Activated CD4-positive, alpha-beta memory T cell treated with anti-CD3 and anti-CD28 coated beads for 36 hours (primary cell): ENCODE measurements at regions of chr1 and their contacts with region 1.

Region 1: DNA sequence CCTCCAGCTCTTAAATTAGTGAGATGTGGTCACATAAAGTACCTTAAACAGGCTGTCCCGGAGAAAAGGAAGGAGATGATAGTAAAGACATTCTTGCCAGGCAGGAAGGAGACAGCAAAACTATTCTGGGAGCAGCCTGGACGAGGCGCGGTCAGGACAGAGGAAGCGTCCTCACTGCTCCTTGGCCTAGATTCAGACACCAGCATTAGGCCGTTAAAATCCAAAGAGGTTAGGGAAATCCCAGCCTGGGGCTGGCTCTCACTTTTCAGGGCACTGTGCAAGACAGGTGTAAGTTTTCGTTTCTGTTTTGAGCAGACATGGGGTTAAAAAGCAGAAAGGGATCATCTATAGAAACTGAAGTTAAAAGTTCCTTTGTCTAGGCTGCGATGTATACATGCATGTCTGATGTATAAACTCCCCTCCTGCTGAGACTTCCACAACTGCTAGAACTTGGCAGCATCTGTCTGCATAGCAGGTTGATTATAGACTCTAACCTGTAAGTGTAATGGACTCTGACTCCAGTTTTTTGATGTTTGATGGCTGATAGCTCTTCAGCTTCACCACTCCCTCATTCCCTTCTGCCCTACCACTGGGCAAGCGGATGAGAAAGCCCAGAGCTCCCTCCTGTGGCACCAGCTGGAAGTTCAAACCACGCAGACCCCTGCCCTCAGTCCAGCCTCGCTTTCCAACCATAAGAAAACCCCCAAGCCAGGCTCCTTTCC is 21.5 kb downstream of the STPG1 start:
- DNase-seq: peak; percentile 79
- H3K4me3 Mint-ChIP-seq: peak overlapping the region; percentile 68
- H3K27ac Mint-ChIP-seq: peak overlapping the region; percentile 82
- H3K4me1 Mint-ChIP-seq: peaks cover 27% of the 10 kb centered on the region
- H3K27me3 Mint-ChIP-seq: no peaks in the 10 kb centered on the region

Region 2: DNA sequence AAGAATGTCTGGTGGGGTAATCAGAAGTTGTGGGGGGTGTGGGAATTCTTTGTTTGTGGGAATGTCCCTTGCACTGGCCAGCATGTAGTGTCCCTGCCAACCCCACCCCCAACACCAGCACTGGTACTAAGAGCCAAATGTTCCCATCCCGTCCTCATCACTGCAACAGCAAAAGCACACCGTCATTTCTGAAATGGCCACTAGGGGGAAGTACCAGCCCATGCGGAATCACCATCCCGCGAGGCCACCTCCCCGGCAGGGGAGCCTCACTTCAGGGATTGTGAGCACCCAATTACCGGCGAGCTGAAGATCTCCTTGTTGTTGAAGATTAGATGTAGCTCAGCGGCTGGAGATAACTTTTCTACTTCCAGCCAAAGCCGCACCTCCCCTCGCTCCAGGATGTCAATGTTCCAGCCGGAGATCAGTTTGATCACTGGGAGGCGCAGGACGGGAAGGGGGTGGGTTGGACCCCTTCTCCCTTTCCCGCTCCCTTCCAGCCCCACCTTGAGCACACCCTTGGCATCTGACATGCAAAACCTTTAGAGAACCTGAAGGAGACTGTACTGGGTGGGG is 321.1 kb before region 1 on chr1:
- CTCF ChIA-PET with region 1: interaction called, 16 read pairs
- POLR2A ChIA-PET with region 1: no interaction called
- intact Hi-C with region 1: loop called (anchors 1 kb)
- DNase-seq: peak; percentile 83
- H3K4me3 Mint-ChIP-seq: no peak overlapping the region
- H3K27ac Mint-ChIP-seq: no peak overlapping the region
- H3K4me1 Mint-ChIP-seq: peaks cover 2% of the 10 kb centered on the region
- H3K27me3 Mint-ChIP-seq: peaks cover 10% of the 10 kb centered on the region

Region 3: DNA sequence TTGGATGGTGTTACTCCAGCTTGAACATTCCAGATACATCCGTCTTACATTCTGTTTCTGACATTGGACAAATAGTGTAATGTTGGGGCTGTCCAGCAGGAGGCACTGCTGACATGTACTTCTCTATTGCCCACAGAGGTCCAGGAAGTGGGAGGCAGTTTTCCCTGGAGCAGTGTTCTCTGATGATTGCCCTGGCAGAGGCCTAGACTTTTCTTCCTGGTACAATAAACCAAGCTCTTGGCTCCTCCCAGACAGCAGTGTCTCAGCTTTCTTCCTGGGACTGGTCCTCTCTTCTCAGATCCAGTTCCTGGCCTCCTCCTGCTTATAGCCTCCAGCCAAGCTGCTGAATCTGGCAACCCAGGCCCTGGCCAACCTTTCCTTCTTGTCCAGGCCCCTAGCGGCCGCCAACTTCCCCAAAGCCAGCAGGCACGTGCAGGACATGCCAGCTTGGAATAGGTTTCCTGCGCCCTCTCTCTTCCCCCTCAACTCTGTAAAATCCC is 190.1 kb before region 1 on chr1:
- CTCF ChIA-PET with region 1: interaction called, 618 read pairs
- POLR2A ChIA-PET with region 1: interaction called, 17 read pairs
- intact Hi-C with region 1: loop called (anchors 1 kb)
- DNase-seq: peak; percentile 76
- H3K4me3 Mint-ChIP-seq: no peak overlapping the region
- H3K27ac Mint-ChIP-seq: no peak overlapping the region
- H3K4me1 Mint-ChIP-seq: peaks cover 23% of the 10 kb centered on the region
- H3K27me3 Mint-ChIP-seq: peaks cover 3% of the 10 kb centered on the region

Region 4: DNA sequence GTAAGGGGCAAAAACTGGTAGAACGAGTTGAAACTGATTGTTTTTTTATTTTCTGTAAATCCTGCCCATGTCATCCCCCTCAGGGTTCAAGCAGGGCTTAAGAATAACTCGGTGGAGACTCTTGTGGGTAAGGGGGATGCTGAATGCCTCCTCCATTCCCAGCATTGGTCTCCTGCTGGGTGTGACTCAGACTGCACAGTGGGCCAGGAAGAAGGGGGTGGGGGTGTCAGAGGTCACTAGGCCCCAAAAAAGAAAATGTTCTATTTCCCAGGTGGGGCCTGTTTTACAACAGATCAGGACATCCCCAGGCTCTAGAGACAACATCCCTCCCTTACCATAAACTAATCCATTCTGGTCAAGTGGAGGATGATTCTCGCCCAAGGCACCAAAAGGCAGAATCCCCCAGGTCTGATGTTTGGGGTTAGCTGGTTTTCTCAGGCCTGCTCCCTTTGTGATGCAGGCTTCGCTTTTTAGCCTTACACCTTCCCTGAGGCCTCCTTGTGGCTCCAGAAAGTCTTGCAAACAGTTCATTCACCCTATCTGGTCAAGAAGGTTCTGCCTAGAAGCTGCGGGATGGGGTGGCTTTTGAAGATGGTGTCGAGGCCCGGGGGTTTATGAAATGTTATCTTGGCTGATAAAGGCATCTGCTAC is 83.6 kb before region 1 on chr1:
- CTCF ChIA-PET with region 1: interaction called, 12 read pairs
- POLR2A ChIA-PET with region 1: no interaction called
- intact Hi-C with region 1: no loop called
- DNase-seq: no peak
- H3K4me3 Mint-ChIP-seq: no peak overlapping the region
- H3K27ac Mint-ChIP-seq: no peak overlapping the region
- H3K4me1 Mint-ChIP-seq: peaks cover 3% of the 10 kb centered on the region
- H3K27me3 Mint-ChIP-seq: peaks cover 4% of the 10 kb centered on the region

Region 5: DNA sequence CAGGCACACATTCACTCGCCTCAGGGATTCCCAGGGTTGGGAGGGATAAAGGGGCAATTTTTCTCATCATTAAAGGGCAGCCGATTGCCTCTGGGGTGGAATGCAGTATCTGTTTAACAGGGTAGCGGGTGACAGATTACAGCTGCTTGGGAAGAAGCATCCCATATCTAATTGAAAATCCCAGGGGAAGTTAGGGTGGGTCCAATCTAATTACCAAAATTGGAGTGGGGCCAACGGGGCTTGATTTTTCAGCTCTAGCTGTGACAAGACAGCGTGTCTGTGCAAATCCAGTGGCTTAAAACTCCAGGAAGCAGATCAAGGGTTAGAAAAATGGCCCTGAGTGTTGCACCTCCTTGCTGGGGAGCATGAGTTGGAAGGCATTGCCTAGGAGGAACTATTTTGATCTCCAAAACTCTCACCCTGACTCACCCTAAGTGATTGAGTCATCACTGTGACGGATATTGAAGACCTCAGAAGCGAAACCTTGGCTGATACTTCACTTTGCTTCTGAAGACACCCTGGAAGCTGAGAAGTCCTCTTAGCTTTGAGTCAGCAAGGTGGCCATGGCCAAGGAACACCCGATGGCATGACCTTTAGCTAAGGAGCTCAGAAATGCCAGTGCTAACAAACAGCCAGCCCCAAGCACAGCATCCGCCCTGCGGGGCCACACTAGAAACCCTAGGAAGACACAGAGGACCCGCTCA is 26.9 kb before region 1 on chr1:
- CTCF ChIA-PET with region 1: interaction called, 30 read pairs
- POLR2A ChIA-PET with region 1: interaction called, 3 read pairs
- intact Hi-C with region 1: no loop called
- DNase-seq: peak; percentile 65
- H3K4me3 Mint-ChIP-seq: no peak overlapping the region
- H3K27ac Mint-ChIP-seq: no peak overlapping the region
- H3K4me1 Mint-ChIP-seq: peaks cover 17% of the 10 kb centered on the region
- H3K27me3 Mint-ChIP-seq: no peaks in the 10 kb centered on the region

Region 6: GRCh38 chr1:24409535-24409934 is 17.5 kb after region 1 on chr1:
- CTCF ChIA-PET with region 1: interaction called, 31 read pairs
- POLR2A ChIA-PET with region 1: interaction called, 3 read pairs
- intact Hi-C with region 1: no loop called
- DNase-seq: no peak
- H3K4me3 Mint-ChIP-seq: no peak overlapping the region
- H3K27ac Mint-ChIP-seq: no peak overlapping the region
- H3K4me1 Mint-ChIP-seq: peaks cover 11% of the 10 kb centered on the region
- H3K27me3 Mint-ChIP-seq: no peaks in the 10 kb centered on the region

Region 7: DNA sequence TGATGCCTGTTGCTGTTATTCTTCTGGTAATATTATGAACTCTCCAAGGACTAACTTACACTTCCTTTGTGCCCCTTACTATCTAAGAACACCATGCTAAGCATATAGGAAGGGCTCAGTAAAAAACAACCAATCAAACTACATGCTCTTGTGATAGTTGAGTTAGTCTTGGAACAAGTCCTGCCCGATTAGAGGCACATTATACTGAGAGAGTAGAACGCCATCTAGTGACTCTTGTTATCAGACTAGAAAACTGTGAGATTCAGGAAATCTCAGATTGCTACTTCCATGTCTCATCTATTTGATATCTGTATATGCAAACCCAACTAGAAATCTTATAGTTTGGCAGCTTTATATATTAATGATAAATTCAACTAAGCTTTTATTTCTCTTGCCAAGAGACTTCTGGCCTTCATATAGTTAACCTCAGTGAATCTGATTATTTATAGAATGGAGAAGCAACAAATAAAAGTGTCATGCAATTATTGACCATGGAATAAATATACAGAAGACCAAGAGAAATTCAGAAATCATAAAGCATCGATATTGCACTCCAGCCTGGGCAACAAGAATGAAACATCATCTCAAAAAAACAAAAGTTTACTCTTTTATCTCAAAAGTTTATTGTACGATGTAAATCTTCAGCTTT is 243.3 kb after region 1 on chr1:
- CTCF ChIA-PET with region 1: interaction called, 11 read pairs
- POLR2A ChIA-PET with region 1: no interaction called
- intact Hi-C with region 1: loop called (anchors 2 kb)
- DNase-seq: no peak
- H3K4me3 Mint-ChIP-seq: no peak overlapping the region
- H3K27ac Mint-ChIP-seq: peak overlapping the region; percentile 25
- H3K4me1 Mint-ChIP-seq: peaks cover 14% of the 10 kb centered on the region
- H3K27me3 Mint-ChIP-seq: peaks cover 2% of the 10 kb centered on the region